ENCODE measurements at regions of chr13 and their contacts with region 1.

Region 1: DNA sequence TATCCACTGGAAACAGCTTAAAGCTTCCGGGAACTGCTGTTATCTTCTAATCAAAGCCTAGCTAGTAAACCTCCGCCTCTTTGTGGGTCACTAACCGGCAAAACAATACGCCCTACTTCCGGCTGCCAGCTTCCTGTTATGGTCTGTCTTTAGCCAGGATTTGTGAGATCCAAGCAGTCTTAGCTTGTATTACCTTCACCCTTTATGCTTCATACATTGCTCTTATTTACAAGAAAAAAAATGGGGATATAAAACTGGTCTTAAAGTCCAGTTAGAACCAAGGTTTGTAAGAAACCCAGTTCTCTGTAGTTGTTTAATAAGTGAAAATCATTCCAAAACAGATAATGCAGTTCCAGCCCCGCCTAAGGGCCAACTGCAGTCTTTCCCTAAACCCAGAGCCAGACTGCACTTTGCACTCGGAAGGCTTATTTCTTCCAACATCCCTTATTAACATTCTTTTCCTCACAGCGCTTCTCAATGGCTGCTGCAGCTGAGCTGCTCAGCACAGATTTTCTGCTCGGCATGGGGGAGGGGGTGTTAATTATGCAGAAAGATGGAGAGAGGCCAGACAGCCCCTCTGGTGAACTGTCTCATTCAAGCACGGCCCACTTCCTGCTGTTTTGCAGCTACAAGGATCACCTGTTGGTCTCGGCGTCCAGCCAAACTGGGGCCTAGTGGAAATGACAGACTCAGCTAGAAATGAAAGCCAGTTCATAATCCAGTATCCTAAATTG is 368.4 kb downstream of the KLF12 start:
- DNase-seq: peak; percentile 95
- H3K4me3 ChIP-seq: peak overlapping the region in 1 of 3 experiments; percentile 10
- H3K27ac ChIP-seq: peak overlapping the region; percentile 62
- H3K4me1 ChIP-seq: peaks cover 33% of the 10 kb centered on the region
- H3K27me3 ChIP-seq: no peaks in the 10 kb centered on the region
- CTCF ChIP-seq: no peak
- POLR2A ChIP-seq: no peak

Region 2: GRCh38 chr13:73451221-73452029 is 314.4 kb before region 1 on chr13:
- CTCF ChIA-PET with region 1: no interaction called
- POLR2A ChIA-PET with region 1: no interaction called
- dilution Hi-C with region 1: no loop called
- intact Hi-C with region 1: no loop called
- DNase-seq: no peak
- H3K4me3 ChIP-seq: no peak overlapping the region
- H3K27ac ChIP-seq: no peak overlapping the region
- H3K4me1 ChIP-seq: no peaks in the 10 kb centered on the region
- H3K27me3 ChIP-seq: no peaks in the 10 kb centered on the region
- CTCF ChIP-seq: no peak
- POLR2A ChIP-seq: no peak

Region 3: DNA sequence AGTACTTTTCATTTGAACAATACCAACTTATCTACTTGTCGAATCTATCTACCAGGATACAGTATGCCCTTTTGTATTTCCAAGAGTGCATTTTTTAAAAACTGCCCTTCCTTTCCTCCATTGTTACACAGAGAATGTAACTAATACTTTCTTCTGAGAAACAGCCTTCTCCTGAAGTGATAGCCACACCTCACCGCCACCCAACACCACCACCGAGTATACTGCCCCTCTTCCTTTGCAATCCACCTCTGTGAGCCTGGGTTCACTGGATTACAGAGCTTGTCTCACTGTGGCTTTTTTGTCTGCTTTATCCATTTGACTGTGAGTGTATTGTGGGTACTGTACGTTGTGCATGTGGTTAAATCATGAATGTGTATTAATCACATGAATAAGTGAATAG is 63.0 kb after region 1 on chr13:
- CTCF ChIA-PET with region 1: interaction called, 3 read pairs
- POLR2A ChIA-PET with region 1: no interaction called
- dilution Hi-C with region 1: no loop called
- intact Hi-C with region 1: loop called (anchors 2 kb)
- DNase-seq: peak; percentile 74
- H3K4me3 ChIP-seq: peak overlapping the region in 1 of 3 experiments; percentile 21
- H3K27ac ChIP-seq: peak overlapping the region; percentile 51
- H3K4me1 ChIP-seq: peaks cover 16% of the 10 kb centered on the region
- H3K27me3 ChIP-seq: no peaks in the 10 kb centered on the region
- CTCF ChIP-seq: no peak
- POLR2A ChIP-seq: no peak

Region 4: DNA sequence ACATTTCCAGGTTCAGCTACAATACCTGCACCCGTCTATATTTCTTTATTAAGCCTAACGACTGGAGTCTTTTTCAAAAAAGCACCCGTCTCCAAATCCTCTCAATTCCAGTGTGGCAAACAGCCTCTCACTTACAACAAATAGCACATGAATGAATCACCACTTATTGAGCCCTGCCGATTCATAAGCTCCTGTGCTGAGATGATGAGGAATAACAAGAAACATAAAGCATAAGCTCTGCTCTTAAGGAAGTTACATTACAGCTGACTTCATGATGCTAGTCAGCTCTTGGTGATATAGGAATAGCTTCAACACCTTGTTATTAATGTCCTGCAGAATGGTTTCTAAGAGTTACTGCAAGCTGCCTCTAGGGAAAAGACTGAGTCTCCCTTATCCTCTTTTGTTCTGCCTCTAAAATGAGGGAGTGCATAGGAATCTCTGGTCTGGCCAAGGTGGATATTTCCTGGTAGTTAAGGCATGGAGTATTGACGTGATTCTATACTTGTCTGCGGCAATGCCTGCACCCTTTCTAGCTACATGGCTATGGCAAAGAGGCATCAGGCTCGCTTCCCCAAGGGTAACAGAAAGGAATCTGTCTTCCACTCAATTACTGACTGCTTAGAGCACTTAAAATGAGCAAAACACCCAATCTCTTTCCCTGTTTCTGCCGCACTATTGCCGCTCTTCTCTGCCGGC is 172.7 kb after region 1 on chr13:
- CTCF ChIA-PET with region 1: no interaction called
- POLR2A ChIA-PET with region 1: no interaction called
- dilution Hi-C with region 1: no loop called
- intact Hi-C with region 1: loop called (anchors 5 kb)
- DNase-seq: peak; percentile 77
- H3K4me3 ChIP-seq: no peak overlapping the region
- H3K27ac ChIP-seq: peak overlapping the region; percentile 32
- H3K4me1 ChIP-seq: peaks cover 23% of the 10 kb centered on the region
- H3K27me3 ChIP-seq: no peaks in the 10 kb centered on the region
- CTCF ChIP-seq: no peak
- POLR2A ChIP-seq: no peak

Region 5: DNA sequence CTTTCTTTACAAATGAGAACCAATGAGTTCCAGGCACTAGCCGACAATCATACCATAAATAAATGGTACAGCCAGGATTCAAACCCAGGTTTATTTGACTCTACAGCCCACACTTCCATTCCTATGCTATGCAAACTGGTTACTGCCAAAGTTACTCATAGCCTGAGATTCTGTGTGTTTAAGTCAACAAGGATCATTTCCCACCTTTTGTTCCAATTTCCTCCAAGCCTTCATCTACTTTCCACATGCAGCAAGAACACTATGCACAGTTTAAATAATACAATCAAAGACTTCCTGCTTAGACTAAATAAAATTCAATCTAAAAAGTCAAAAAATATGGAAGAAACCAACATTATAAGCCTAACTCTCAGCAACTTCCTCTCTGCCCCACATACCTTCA is 427.6 kb after region 1 on chr13:
- CTCF ChIA-PET with region 1: no interaction called
- POLR2A ChIA-PET with region 1: no interaction called
- dilution Hi-C with region 1: no loop called
- intact Hi-C with region 1: loop called (anchors 2 kb)
- DNase-seq: peak; percentile 94
- H3K4me3 ChIP-seq: no peak overlapping the region
- H3K27ac ChIP-seq: peak overlapping the region; percentile 38
- H3K4me1 ChIP-seq: peaks cover 19% of the 10 kb centered on the region
- H3K27me3 ChIP-seq: no peaks in the 10 kb centered on the region
- CTCF ChIP-seq: no peak
- POLR2A ChIP-seq: no peak

Region 6: DNA sequence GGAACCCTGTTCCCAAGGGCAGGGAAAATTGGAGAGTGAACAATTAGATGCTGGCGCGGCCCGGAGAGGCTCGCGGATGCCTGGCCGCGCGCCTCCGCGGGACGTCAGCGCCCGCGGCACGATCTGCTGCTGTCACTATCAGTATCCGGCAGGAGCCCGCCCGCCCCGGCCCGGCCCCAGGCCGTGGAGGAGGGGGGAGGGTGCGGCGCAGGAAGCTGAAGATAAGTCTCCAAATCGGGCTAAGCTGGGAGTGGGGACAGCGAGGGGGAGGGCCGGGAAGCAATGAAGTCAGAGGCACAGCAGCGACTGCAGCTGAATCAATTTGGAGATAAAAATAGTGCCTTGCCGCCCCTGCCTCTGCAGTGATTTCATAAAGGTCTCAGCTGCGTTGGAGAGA is 809.9 kb after region 1 on chr13:
- CTCF ChIA-PET with region 1: no interaction called
- POLR2A ChIA-PET with region 1: no interaction called
- dilution Hi-C with region 1: no loop called
- intact Hi-C with region 1: loop called (anchors 10 kb)
- DNase-seq: peak; percentile 62
- H3K4me3 ChIP-seq: peak overlapping the region; percentile 14 to 21 (median 19)
- H3K27ac ChIP-seq: no peak overlapping the region
- H3K4me1 ChIP-seq: peaks cover 6% of the 10 kb centered on the region
- H3K27me3 ChIP-seq: peaks cover 0 to 2% of the 10 kb centered on the region in 2 experiments
- CTCF ChIP-seq: no peak
- POLR2A ChIP-seq: no peak